ENCODE measurements at regions of chr13 and their contacts with region 1.

Region 1: GRCh38 chr13:64749301-64749700 is 2480.8 kb downstream of the PCDH9 start:
- DNase-seq: no peak
- H3K4me3 ChIP-seq: no peak overlapping the region
- H3K27ac ChIP-seq: no peak overlapping the region
- H3K4me1 ChIP-seq: no peaks in the 10 kb centered on the region
- H3K27me3 ChIP-seq: no peaks in the 10 kb centered on the region
- CTCF ChIP-seq: no peak
- POLR2A ChIP-seq: no peak

Region 2: GRCh38 chr13:65417954-65418353 is 668.7 kb after region 1 on chr13:
- intact Hi-C with region 1: no loop called
- DNase-seq: no peak
- H3K4me3 ChIP-seq: no peak overlapping the region
- H3K27ac ChIP-seq: no peak overlapping the region
- H3K4me1 ChIP-seq: no peaks in the 10 kb centered on the region
- H3K27me3 ChIP-seq: no peaks in the 10 kb centered on the region
- CTCF ChIP-seq: no peak
- POLR2A ChIP-seq: no peak

Region 3: DNA sequence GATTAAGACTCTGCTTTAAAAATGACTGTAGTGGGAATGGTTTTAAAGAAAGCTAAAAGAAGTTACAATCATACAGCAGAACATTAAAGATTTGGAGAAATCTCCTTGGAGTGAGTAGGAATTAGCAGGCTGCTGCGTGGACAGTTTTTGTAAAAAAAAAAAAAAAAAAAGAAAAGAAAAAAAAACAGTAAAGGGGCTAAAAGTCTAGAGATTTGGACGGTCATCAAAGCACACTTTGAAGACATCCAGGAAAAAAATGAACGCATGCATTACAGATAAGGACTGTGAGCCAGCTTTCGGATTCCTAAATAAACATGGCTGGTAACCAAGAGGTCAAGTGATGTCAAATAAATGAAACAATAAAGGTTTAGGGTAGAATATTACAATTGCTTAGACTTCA is 780.2 kb after region 1 on chr13:
- intact Hi-C with region 1: loop called (anchors 5 kb)
- DNase-seq: no peak
- H3K4me3 ChIP-seq: no peak overlapping the region
- H3K27ac ChIP-seq: no peak overlapping the region
- H3K4me1 ChIP-seq: no peaks in the 10 kb centered on the region
- H3K27me3 ChIP-seq: no peaks in the 10 kb centered on the region
- CTCF ChIP-seq: no peak
- POLR2A ChIP-seq: no peak